GM12878 (cell line): ENCODE measurements at regions of chr15 and their contacts with region 1.

Region 1: DNA sequence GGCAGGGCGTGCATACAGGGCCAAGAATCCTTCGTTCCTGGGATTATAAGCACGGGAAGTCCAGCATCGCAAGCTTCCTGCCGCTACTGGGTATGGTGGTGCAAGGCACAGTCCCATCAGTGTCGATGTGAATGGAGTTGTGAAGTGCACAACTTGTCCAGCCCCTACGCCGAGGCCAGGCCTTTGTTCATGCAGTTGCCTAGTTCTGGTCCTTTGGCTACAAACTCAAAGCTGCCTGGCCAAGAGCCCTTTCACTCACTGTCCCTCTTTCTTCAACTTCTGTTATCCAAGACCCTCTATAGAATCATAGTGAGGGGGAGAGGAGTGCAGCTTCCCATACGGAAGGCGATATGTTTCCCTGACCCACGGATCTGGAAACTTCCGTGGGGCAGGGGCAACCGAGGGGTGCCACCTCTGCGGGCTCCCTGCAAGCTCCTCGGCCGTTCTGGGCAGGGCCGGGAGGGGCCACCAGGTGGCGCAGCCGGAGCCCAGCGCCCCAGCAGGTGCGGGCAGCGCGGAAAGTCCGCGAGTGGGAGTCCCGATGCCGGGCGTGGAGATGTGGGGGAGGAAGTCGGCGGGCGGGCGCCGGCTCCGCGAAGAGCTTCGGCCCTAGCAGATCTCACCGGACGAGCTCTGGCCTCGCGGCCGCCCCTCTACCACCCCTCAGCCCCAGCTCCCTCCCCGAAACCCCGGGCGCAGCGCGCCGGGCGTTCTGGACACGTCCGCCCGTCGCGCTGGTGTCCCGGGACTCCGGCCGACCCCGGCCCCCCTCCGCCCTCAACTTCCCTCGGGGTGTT is 693 bp downstream of the RASGRP1 start:
- DNase-seq: no peak
- ATAC-seq: peak; percentile 77
- H3K4me3 ChIP-seq: peak overlapping the region; percentile 75
- H3K27ac ChIP-seq: peak overlapping the region; percentile 72
- H3K4me1 ChIP-seq: peaks cover 37% of the 10 kb centered on the region
- H3K27me3 ChIP-seq: no peaks in the 10 kb centered on the region
- CTCF ChIP-seq: peak; percentile 88 to 95 (median 94)
- EP300 ChIP-seq: no peak
- POLR2A ChIP-seq: no peak; the same call in 1 of the 2 replicates
- RAD21 ChIP-seq: peak; percentile 75

Region 2: GRCh38 chr15:38474155-38474757 is 89.7 kb before region 1 on chr15:
- CTCF ChIA-PET with region 1: interaction called, 7 read pairs
- POLR2A ChIA-PET with region 1: no interaction called
- RAD21 ChIA-PET with region 1: interaction called, 8 read pairs
- SMC1A ChIA-PET with region 1: interaction called, 8 read pairs
- in situ Hi-C with region 1: no loop called
- intact Hi-C with region 1: loop called (anchors 5 kb)
- DNase-seq: peak; percentile 33
- ATAC-seq: peak; percentile 99
- H3K4me3 ChIP-seq: no peak overlapping the region
- H3K27ac ChIP-seq: no peak overlapping the region
- H3K4me1 ChIP-seq: no peaks in the 10 kb centered on the region
- H3K27me3 ChIP-seq: no peaks in the 10 kb centered on the region
- CTCF ChIP-seq: peak; percentile 67 to 92 (median 74); a peak in 5 of 6 replicates
- EP300 ChIP-seq: no peak
- POLR2A ChIP-seq: no peak
- RAD21 ChIP-seq: peak; percentile 84

Region 3: DNA sequence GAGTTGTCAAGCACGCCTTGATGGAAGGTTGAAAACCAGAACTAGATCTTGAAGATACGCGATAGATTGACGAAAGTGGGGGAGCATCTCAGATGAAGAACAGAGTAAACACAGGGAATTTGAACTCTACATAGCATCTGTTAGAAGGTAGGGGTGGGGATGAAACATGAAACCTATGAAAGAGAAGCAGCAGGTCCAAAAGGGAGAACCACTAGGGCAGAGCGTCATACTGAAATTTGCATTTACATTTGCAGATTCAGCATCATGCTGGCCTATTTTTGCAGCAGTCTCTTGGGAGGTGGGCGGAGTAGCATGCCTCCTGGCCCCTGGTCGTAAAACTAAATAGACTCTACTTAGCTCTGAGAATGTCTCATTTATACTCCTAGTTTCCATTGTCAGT is 46.8 kb after region 1 on chr15:
- CTCF ChIA-PET with region 1: interaction called, 7 read pairs
- POLR2A ChIA-PET with region 1: interaction called, 6 read pairs
- RAD21 ChIA-PET with region 1: interaction called, 17 read pairs
- SMC1A ChIA-PET with region 1: interaction called, 12 read pairs
- in situ Hi-C with region 1: no loop called
- intact Hi-C with region 1: no loop called
- DNase-seq: no peak
- ATAC-seq: peak; percentile 29
- H3K4me3 ChIP-seq: no peak overlapping the region
- H3K27ac ChIP-seq: no peak overlapping the region
- H3K4me1 ChIP-seq: no peaks in the 10 kb centered on the region
- H3K27me3 ChIP-seq: no peaks in the 10 kb centered on the region
- CTCF ChIP-seq: no peak
- EP300 ChIP-seq: no peak
- POLR2A ChIP-seq: no peak
- RAD21 ChIP-seq: no peak

Region 4: DNA sequence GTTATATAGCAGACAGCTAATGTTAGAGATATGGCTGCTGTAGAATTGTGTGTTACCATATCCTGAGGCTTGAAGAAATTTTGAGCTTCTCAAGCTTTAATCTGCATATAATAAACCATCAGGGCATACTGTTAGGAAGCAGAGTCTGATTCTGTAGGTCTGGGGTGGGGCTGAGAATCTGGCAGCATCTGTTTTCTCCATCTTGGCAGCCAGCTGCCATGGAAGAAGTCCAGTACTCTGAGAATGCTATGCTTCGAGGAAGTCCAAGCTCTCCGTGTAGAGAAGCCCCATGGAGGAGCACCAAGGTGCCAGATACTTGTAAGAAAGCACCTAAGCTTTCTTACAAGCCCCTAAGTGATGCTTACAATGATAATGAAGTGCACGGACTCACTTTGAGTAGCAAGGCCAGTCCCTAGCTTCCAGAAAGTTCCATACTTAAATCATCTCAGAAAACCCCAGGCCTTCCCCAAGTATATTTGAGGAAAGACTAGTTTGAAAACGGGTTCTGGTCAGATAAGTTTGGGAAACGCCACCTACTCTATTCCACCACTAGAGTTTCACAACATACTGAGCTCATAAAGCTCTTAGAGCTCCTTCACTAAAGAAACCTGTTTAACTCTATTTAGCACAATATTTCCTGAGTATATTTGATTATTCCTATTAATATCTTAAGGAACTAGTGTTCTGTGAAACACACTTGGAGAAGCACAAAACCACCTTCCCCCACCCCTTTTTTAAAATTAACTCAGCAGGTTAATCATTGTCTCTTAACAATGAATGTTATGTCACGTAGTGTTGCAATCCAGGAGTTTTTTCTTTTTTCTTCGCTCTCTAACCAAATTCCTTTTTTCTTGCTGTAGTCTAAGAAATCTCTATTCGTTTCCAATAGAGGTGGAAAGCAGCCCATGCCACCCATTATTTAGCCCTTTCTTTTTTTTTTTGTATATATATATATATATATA is 60.6 kb after region 1 on chr15:
- CTCF ChIA-PET with region 1: interaction called, 116 read pairs
- POLR2A ChIA-PET with region 1: interaction called, 53 read pairs
- RAD21 ChIA-PET with region 1: interaction called, 331 read pairs
- SMC1A ChIA-PET with region 1: interaction called, 194 read pairs
- in situ Hi-C with region 1: no loop called
- intact Hi-C with region 1: loop called (anchors 2 kb)
- DNase-seq: no peak
- ATAC-seq: peak; percentile 33
- H3K4me3 ChIP-seq: no peak overlapping the region
- H3K27ac ChIP-seq: no peak overlapping the region
- H3K4me1 ChIP-seq: no peaks in the 10 kb centered on the region
- H3K27me3 ChIP-seq: no peaks in the 10 kb centered on the region
- CTCF ChIP-seq: 0 out of 6 replicates have a peak, but pooled peaks of 1 of the 3 experiments have one; percentile 3
- EP300 ChIP-seq: no peak
- POLR2A ChIP-seq: no peak
- RAD21 ChIP-seq: no peak

Region 5: GRCh38 chr15:38647683-38648082 is 83.8 kb after region 1 on chr15:
- CTCF ChIA-PET with region 1: interaction called, 86 read pairs
- POLR2A ChIA-PET with region 1: interaction called, 33 read pairs
- RAD21 ChIA-PET with region 1: interaction called, 95 read pairs
- SMC1A ChIA-PET with region 1: interaction called, 103 read pairs
- in situ Hi-C with region 1: no loop called
- intact Hi-C with region 1: no loop called
- DNase-seq: no peak
- ATAC-seq: no peak
- H3K4me3 ChIP-seq: no peak overlapping the region
- H3K27ac ChIP-seq: no peak overlapping the region
- H3K4me1 ChIP-seq: peaks cover 27% of the 10 kb centered on the region
- H3K27me3 ChIP-seq: no peaks in the 10 kb centered on the region
- CTCF ChIP-seq: peak in 2 of 3 experiments; percentile 5 to 17; a peak in 1 of 6 replicates
- EP300 ChIP-seq: no peak
- POLR2A ChIP-seq: no peak
- RAD21 ChIP-seq: peak; percentile 23; the same call in 1 of the 2 replicates

Region 6: DNA sequence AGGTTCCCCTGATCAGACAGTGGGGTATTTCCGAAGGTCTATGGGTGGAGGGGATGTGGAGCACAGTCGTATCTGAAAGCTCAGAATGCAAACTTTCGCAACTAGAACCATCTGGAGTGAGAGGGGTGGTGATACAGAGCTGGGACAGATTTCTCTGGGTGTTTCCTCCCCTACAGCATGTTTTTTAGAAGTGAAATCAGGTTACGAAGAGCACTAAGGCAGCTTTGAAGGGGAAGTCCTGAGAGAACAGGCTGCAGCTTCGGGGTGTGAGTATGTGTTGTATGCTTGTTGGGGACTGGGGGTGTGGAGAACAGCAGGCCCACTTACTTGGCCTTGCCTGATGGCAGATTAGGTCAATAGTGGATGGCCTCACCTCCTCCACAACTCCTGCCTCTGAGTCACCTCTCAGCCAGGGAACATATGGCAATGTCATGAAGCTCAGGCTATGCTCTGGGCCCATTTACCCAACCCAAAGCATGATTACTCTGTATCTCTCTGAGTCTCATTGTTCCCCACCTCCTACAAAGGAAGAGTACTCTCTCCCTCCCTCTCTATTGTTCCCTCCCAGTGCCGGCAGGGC is 107.8 kb after region 1 on chr15:
- CTCF ChIA-PET with region 1: interaction called, 22 read pairs
- POLR2A ChIA-PET with region 1: interaction called, 84 read pairs
- RAD21 ChIA-PET with region 1: interaction called, 181 read pairs
- SMC1A ChIA-PET with region 1: interaction called, 130 read pairs
- in situ Hi-C with region 1: no loop called
- intact Hi-C with region 1: loop called (anchors 1 kb)
- DNase-seq: peak; percentile 91
- ATAC-seq: peak; percentile 76
- H3K4me3 ChIP-seq: no peak overlapping the region
- H3K27ac ChIP-seq: peak overlapping the region; percentile 77
- H3K4me1 ChIP-seq: peaks cover 56% of the 10 kb centered on the region
- H3K27me3 ChIP-seq: no peaks in the 10 kb centered on the region
- CTCF ChIP-seq: no peak
- EP300 ChIP-seq: peak in 1 of 2 experiments; percentile 7; a peak in 2 of 4 replicates
- POLR2A ChIP-seq: peak; percentile 61
- RAD21 ChIP-seq: no peak; the same call in 1 of the 2 replicates

Region 7: GRCh38 chr15:38941399-38941953 is 377.6 kb after region 1 on chr15:
- CTCF ChIA-PET with region 1: no interaction called
- POLR2A ChIA-PET with region 1: no interaction called
- RAD21 ChIA-PET with region 1: no interaction called
- SMC1A ChIA-PET with region 1: no interaction called
- in situ Hi-C with region 1: no loop called
- intact Hi-C with region 1: no loop called
- DNase-seq: no peak
- ATAC-seq: no peak
- H3K4me3 ChIP-seq: no peak overlapping the region
- H3K27ac ChIP-seq: no peak overlapping the region
- H3K4me1 ChIP-seq: no peaks in the 10 kb centered on the region
- H3K27me3 ChIP-seq: no peaks in the 10 kb centered on the region; a peak in 2 of 4 replicates
- CTCF ChIP-seq: no peak
- EP300 ChIP-seq: no peak
- POLR2A ChIP-seq: no peak
- RAD21 ChIP-seq: no peak